Activated CD4-positive, alpha-beta T cell treated with anti-CD3 and anti-CD28 coated beads, Interleukin-2, amount 10 ng/mL, durations not matched to agents 7 days and 5 days (primary cell): ENCODE measurements at regions of chrX and their contacts with region 1.

Region 1: GRCh38 chrX:119852382-119853353 is at the start of gene UPF3B:
- DNase-seq: peak; percentile 96
- H3K4me3 Mint-ChIP-seq: peak within 1 kb of the TSS; percentile 98
- H3K27ac Mint-ChIP-seq: peak within 1 kb of the TSS; percentile 97
- H3K4me1 Mint-ChIP-seq: peaks cover 22% of the 10 kb centered on the region
- H3K27me3 Mint-ChIP-seq: no peaks in the 10 kb centered on the region
- total RNA-seq, gene UPF3B: 11.8 to 12.3 TPM

Region 2: GRCh38 chrX:119791438-119792231 is 61.0 kb before region 1 on chrX and contains the start of gene RPL39:
- CTCF ChIA-PET with region 1: interaction called, 6 read pairs
- POLR2A ChIA-PET with region 1: interaction called, 10 read pairs
- DNase-seq: peak; percentile 84
- H3K4me3 Mint-ChIP-seq: peak within 1 kb of the TSS; percentile 95
- H3K27ac Mint-ChIP-seq: peak within 1 kb of the TSS; percentile 97
- H3K4me1 Mint-ChIP-seq: peaks cover 29% of the 10 kb centered on the region
- H3K27me3 Mint-ChIP-seq: no peaks in the 10 kb centered on the region
- total RNA-seq, gene RPL39: 1,629 to 1,903 TPM

Region 3: DNA sequence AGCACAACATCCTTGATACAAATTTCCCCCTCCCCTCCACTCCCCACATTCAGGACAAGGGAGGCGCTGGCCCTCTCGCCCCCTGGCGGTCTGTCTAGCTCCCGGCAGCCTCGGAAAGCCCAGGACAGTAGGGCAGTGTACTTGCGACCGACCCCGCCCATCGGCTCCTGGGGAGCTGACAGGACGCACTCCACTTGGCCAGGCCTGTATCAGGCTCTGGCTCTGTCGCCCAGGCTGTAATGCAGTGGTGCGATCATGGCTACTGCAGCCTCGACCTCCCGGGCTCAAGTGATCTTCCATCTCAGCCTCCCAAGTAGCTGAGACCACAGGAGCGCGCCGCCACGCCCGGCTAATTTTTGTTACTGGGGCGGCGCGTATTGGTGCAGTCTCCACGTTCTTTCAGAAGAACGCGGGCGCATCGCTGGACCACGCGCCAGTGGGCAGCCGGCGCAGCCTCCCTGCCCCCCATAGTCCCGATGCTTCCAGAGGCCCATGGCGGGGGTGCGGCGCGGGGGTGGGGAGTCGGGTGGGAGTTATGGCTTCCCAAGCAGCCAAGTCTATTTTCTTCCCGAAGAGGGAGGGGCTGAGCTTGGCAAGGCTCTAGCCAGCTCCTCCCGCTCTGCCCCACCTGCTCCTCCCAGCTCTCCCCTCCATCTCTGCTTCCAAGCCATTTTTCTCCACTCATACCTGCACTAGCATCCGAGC is 35.2 kb after region 1 on chrX:
- CTCF ChIA-PET with region 1: no interaction called
- POLR2A ChIA-PET with region 1: no interaction called
- DNase-seq: peak; percentile 42
- H3K4me3 Mint-ChIP-seq: peak overlapping the region; percentile 32
- H3K27ac Mint-ChIP-seq: no peak overlapping the region
- H3K4me1 Mint-ChIP-seq: peaks cover 14% of the 10 kb centered on the region
- H3K27me3 Mint-ChIP-seq: peaks cover 5% of the 10 kb centered on the region